ENCODE measurements at regions of chr1 and their contacts with region 1.

Region 1: DNA sequence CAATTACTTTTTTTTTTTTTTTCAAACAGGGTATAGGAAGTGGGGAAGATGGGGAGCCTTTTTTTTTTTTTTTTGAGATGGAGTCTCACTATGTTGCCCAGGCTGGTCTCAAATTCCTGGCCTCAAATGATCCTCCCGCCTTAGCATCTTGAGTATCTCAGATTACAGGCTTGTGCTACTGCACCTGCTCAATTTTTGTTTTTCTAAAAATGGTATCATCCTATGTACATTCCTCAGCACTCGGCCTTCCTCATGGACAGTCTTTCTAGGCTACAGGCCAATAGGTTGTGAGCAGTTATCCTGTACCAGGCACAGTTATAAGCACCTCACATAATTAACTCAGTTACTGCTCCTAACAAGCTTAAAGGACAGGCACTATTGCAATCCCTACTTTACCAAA is 132.1 kb upstream of the EDN2 start:
- DNase-seq: no peak
- ATAC-seq: no peak
- H3K4me3 Mint-ChIP-seq: no peak overlapping the region
- H3K27ac Mint-ChIP-seq: no peak overlapping the region
- H3K4me1 Mint-ChIP-seq: peaks cover 12% of the 10 kb centered on the region
- H3K27me3 Mint-ChIP-seq: no peaks in the 10 kb centered on the region

Region 2: GRCh38 chr1:41629571-41629970 is 13.0 kb after region 1 on chr1:
- POLR2A ChIA-PET with region 1: no interaction called
- DNase-seq: no peak
- ATAC-seq: no peak
- H3K4me3 Mint-ChIP-seq: no peak overlapping the region
- H3K27ac Mint-ChIP-seq: no peak overlapping the region
- H3K4me1 Mint-ChIP-seq: peaks cover 19% of the 10 kb centered on the region
- H3K27me3 Mint-ChIP-seq: no peaks in the 10 kb centered on the region

Region 3: GRCh38 chr1:41851589-41851988 is 235.0 kb after region 1 on chr1:
- POLR2A ChIA-PET with region 1: interaction called, 12 read pairs
- DNase-seq: no peak
- ATAC-seq: no peak
- H3K4me3 Mint-ChIP-seq: no peak overlapping the region
- H3K27ac Mint-ChIP-seq: no peak overlapping the region
- H3K4me1 Mint-ChIP-seq: peaks cover 22% of the 10 kb centered on the region
- H3K27me3 Mint-ChIP-seq: no peaks in the 10 kb centered on the region

Measured in activated naive CD8-positive, alpha-beta T cell treated with anti-CD3 and anti-CD28 coated beads, Interleukin-2, amount 10 ng/mL, durations not matched to agents 7 days and 5 days (primary cell).